HepG2 (cell line): ENCODE measurements at regions of chr1 and their contacts with region 1.

Region 1: DNA sequence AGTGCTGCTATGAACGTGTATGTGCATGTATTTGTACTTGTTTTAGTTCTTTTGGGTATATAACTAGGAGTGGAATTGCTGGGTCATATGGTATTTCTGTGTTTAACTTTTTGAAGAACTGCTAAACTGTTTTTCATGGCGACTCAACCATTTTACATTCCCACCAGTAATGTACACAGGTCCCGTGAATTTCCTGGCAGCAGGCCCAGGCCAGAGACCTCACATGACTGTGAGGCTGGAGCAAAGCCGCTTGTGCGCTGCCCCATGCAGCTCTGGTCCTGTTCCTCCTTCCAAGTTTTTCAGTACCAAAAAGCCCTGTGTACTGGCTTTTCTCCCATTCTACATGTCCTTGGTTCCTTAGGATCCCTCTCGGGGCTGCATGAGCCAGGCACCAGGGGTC is 29.6 kb downstream of the ACOT11 start:
- DNase-seq: peak; percentile 86
- ATAC-seq: peak; percentile 44
- H3K4me3 ChIP-seq: 0 out of 6 replicates have a peak overlapping the region, but pooled peaks of 1 of the 3 experiments have one; percentile 17
- H3K27ac ChIP-seq: peak overlapping the region; percentile 51
- H3K4me1 ChIP-seq: peaks cover 85% of the 10 kb centered on the region
- H3K27me3 ChIP-seq: no peaks in the 10 kb centered on the region
- CTCF ChIP-seq: no peak
- EP300 ChIP-seq: no peak
- POLR2A ChIP-seq: no peak
- RAD21 ChIP-seq: no peak

Region 2: GRCh38 chr1:54564312-54565112 is 13.1 kb before region 1 on chr1:
- CTCF ChIA-PET with region 1: no interaction called
- POLR2A ChIA-PET with region 1: interaction called, 14 read pairs
- in situ Hi-C with region 1: no loop called
- intact Hi-C with region 1: no loop called
- DNase-seq: no peak
- ATAC-seq: peak; percentile 45
- H3K4me3 ChIP-seq: peak overlapping the region in 2 of 3 experiments; percentile 31 to 53; a peak in 3 of 6 replicates
- H3K27ac ChIP-seq: peak overlapping the region; percentile 1
- H3K4me1 ChIP-seq: peaks cover 57% of the 10 kb centered on the region
- H3K27me3 ChIP-seq: no peaks in the 10 kb centered on the region
- CTCF ChIP-seq: no peak
- EP300 ChIP-seq: no peak
- POLR2A ChIP-seq: no peak
- RAD21 ChIP-seq: no peak

Region 3: DNA sequence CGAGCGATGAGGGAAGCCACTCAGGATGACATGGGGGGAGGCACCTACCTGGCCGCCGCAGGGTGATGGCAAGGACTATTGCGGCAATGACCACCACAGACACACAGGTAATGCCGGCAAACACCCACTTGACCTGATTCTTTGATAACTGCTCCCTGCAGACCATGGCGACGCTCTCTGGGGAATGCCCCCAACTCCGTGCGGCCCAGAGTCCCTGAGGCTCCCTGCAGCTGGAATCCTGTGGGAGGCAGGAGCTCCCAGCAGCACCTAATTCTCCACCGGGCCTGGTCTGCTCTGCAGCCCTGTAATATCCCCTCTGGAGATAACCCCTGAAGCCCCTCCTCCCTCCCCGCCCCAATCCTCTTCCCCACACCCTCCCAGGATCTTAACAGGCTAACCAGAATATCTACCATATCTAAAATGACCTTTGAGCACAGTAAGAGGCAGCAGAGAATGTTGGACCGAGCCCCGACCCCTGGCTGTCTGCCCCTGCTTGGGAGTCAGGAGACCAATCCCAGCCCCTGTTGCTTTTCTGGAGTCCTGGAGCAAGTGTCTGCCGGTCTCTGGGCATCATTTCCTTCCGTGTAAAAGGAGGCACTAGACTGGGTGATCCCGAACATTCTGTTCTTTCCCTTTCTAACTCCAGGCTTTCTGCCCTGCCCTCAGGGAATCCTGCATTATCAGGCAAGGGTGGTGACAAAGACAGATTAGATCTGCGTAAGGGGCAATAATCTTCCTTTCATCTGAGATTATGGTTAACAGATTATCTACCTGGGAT is 45.8 kb after region 1 on chr1 and contains the start of gene FAM151A:
- CTCF ChIA-PET with region 1: no interaction called
- POLR2A ChIA-PET with region 1: interaction called, 3 read pairs
- in situ Hi-C with region 1: no loop called
- intact Hi-C with region 1: loop called (anchors 5 kb)
- DNase-seq: peak; percentile 55
- ATAC-seq: peak; percentile 83
- H3K4me3 ChIP-seq: peak within 1 kb of the TSS; percentile 23 to 66 (median 49); a peak in 5 of 6 replicates
- H3K27ac ChIP-seq: no peak within 1 kb of the TSS
- H3K4me1 ChIP-seq: peaks cover 17% of the 10 kb centered on the region
- H3K27me3 ChIP-seq: peaks cover 1 to 3% of the 10 kb centered on the region in 2 experiments; a peak in 2 of 5 replicates
- CTCF ChIP-seq: no peak
- EP300 ChIP-seq: no peak
- POLR2A ChIP-seq: no peak
- RAD21 ChIP-seq: no peak
- total RNA-seq, gene FAM151A: 1.5 and 3.6 TPM in 2 replicates